Dorsolateral prefrontal cortex (tissue), 120 donors: ENCODE measurements at regions of chr6 and their contacts with region 1.

Region 1: DNA sequence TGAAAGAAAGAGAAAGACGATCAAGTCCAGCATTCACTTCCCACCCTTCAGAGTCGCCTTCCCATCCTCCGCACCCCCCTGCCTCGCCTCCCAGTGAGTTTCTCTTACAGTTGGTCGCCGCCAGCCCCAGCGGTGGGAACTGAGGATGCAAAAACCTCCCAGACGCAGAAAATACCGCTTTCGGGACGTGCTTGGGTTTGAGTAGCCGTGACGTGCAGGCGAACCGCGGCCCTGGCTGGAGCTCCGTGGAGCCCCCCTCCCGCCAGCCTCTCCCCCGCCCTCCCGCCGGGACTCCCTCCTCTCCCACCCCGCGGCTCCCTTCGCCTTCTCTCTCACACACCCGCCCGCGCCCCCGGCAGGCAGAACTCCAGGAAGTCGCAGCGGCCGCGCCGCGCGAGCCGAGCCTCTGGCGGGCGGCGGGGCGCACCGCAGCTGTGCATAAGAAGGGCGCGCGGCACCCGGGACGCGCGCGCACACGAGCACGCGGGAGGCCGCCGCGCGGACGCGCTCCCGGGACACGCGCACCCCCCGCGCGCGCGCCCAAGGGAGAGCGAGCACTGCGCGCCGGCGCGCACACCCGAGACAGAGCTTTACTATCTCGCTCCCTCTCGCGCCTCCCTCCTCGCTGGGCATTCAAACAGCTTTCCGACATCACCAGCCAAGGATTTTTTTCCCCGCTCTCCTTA is at the start of gene ADGRB3:
- DNase-seq: peak; percentile 85 to 96 (median 92)
- H3K4me3 ChIP-seq: peak within 1 kb of the TSS; percentile 67 to 96 (median 83)
- H3K27ac ChIP-seq: peak within 1 kb of the TSS; percentile 89 to 99 (median 97)
- H3K27me3 ChIP-seq: no peaks in the 10 kb centered on the region
- CTCF ChIP-seq: peak in 29 of 56 donors; percentile 4 to 55 (median 24)
- total RNA-seq, gene ADGRB3: 64.3 to 152 (median 114) TPM

Region 2: GRCh38 chr6:67131827-67132226 is 1503.0 kb before region 1 on chr6:
- intact Hi-C with region 1: loop called in 1 of 2 experiments (anchors 10 kb)
- DNase-seq: peak; percentile 20 to 87 (median 70)
- H3K4me3 ChIP-seq: no peak overlapping the region
- H3K27ac ChIP-seq: peak overlapping the region in 4 of 59 donors; percentile 11 to 58 (median 36)
- H3K27me3 ChIP-seq: no peaks in the 10 kb centered on the region
- CTCF ChIP-seq: no peak

Region 3: GRCh38 chr6:68108233-68108835 is 526.5 kb before region 1 on chr6:
- intact Hi-C with region 1: no loop called
- DNase-seq: no peak
- H3K4me3 ChIP-seq: no peak overlapping the region
- H3K27ac ChIP-seq: peak overlapping the region in 2 of 59 donors; percentile 16
- H3K27me3 ChIP-seq: no peaks in the 10 kb centered on the region
- CTCF ChIP-seq: no peak

Region 4: GRCh38 chr6:68506911-68507310 is 128.0 kb before region 1 on chr6:
- intact Hi-C with region 1: no loop called
- DNase-seq: no peak
- H3K4me3 ChIP-seq: no peak overlapping the region
- H3K27ac ChIP-seq: no peak overlapping the region
- H3K27me3 ChIP-seq: no peaks in the 10 kb centered on the region
- CTCF ChIP-seq: no peak

Region 5: DNA sequence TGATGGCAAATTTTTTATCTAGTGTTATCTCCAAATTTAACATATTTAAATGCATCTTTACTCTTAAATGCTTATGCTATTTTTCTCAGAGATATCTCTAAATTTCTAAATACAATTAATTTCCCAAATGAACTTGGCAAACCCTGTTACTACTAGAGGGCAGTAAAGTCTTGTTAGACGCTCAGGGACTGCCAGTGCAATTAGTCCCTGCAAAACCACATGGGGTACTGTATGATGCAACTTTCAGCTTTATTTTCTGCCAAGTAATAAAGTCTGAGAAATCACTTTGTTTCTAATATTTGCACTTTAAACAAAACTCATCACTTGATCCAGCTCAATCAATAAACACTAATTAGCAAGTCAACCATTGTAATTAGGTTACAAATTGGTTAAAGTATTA is 75.8 kb before region 1 on chr6:
- intact Hi-C with region 1: loop called (anchors 2 to 5 kb)
- DNase-seq: peak in 1 of 10 donors; percentile 17
- H3K4me3 ChIP-seq: peak overlapping the region in 39 of 59 donors; percentile 0 to 53 (median 24)
- H3K27ac ChIP-seq: peak overlapping the region in 5 of 59 donors; percentile 1 to 55 (median 40)
- H3K27me3 ChIP-seq: no peaks in the 10 kb centered on the region
- CTCF ChIP-seq: peak in 55 of 56 donors; percentile 10 to 79 (median 53)

Region 6: DNA sequence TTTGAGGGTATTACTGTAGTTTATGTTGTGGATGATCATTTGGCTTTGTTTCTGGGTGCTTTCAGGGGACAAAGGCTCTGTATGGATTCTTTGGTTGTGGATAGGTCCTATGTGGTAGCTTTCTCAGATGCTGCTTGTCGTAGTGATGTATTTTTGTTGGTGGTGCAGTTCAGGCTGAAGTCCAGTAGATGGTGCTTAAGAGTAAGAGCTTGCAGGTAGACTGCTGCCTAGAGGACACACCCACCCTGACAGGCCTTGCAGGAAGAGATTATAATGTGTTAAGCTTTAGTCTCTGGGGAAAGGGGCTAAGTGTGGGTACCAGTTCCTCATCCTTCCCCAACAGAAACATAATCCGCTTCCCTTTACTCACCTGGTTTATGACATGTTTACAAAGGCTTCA is 62.3 kb before region 1 on chr6:
- intact Hi-C with region 1: loop called in 1 of 2 experiments (anchors 5 kb)
- DNase-seq: peak in 1 of 10 donors; percentile 5
- H3K4me3 ChIP-seq: no peak overlapping the region
- H3K27ac ChIP-seq: no peak overlapping the region
- H3K27me3 ChIP-seq: no peaks in the 10 kb centered on the region
- CTCF ChIP-seq: peak in 34 of 56 donors; percentile 9 to 66 (median 30)

Region 7: DNA sequence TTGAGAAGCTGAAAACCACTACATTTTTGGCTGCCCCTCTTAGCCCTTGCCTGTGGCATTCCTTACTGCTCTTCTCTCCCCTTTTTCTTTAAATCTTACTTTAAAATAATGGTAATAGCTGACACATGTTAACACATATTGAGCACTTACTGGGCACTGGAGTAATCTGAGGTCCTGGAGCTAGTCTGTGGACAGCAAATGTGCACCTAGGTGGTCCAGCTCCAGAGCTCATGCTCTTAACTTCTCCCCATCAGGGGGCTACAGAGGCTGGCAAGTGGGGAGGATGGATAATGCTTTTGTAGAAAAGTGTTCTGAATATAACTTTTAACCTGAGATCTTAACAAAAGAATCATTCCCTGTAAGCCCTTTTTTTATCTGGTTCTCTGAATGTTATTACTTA is 75.0 kb after region 1 on chr6:
- intact Hi-C with region 1: loop called in 1 of 2 experiments (anchors 5 kb)
- DNase-seq: no peak
- H3K4me3 ChIP-seq: peak overlapping the region in 49 of 59 donors; percentile 1 to 53 (median 26)
- H3K27ac ChIP-seq: peak overlapping the region; percentile 25 to 90 (median 79)
- H3K27me3 ChIP-seq: no peaks in the 10 kb centered on the region
- CTCF ChIP-seq: no peak

Region 8: GRCh38 chr6:68778356-68779020 is 143.6 kb after region 1 on chr6:
- intact Hi-C with region 1: loop called (anchors 1 kb)
- DNase-seq: peak in 6 of 10 donors; percentile 25 to 67 (median 54)
- H3K4me3 ChIP-seq: peak overlapping the region in 52 of 59 donors; percentile 3 to 61 (median 36)
- H3K27ac ChIP-seq: peak overlapping the region; percentile 60 to 98 (median 87)
- H3K27me3 ChIP-seq: no peaks in the 10 kb centered on the region
- CTCF ChIP-seq: peak; percentile 56 to 98 (median 87)

Region 9: DNA sequence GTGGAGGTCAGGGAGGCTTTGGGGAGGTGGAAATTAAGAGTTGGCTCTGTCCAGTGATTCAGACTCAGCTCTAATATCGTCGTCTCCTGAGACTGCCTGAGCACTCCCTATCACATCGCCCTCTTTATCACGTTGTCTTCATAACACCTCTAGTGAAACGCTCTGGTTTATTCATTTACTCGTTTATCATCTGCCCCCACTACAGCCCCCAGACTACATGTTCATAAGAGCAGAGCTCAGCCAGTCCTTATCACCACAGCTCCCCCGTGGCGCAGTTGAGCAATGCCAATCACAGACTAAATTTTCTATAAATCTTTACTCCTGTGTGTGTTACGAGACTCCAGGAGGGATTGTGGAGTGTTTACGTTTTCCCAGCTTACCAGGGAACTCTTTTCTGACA is 316.4 kb after region 1 on chr6:
- intact Hi-C with region 1: no loop called
- DNase-seq: peak in 3 of 10 donors; percentile 7 to 52 (median 22)
- H3K4me3 ChIP-seq: no peak overlapping the region
- H3K27ac ChIP-seq: peak overlapping the region in 2 of 59 donors; percentile 19 to 21
- H3K27me3 ChIP-seq: no peaks in the 10 kb centered on the region
- CTCF ChIP-seq: no peak

Region 10: DNA sequence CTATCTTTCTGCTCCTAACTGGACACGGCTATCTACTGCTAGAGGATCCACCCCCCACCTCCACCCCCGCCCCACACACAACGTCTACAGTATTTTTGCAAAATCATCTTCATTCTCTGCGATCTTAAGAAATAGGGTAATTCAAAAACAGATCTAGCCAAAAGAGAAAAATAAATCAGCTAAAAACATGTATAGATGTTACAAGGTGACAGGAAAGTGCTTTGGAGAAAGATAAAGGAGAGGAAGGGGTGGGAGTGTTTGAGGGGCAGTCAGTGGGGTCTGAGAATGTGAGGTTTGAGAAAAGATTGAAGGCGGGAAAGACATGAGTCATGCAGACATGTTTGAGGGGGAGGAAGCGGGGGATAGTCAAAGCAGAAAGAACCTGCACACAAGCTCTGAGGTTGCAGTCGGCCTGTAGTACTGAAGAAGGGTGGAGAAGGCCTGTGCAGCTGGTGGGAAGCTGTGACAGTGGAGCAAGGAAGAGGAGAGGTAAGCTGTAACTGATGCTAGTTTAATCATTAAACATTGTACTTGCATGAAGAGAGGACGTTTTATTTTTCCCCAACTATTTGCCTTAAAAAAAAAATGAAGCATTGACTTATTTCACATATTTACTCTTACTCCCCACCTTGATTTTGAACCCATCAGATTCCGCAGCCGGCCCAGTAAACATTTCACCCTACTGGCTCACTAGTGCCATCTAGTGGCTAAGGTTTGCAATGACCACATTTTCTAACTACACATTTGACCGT is 332.9 kb after region 1 on chr6:
- intact Hi-C with region 1: loop called (anchors 2 to 5 kb)
- DNase-seq: peak in 8 of 10 donors; percentile 38 to 59 (median 52)
- H3K4me3 ChIP-seq: peak overlapping the region in 2 of 59 donors; percentile 1 to 15
- H3K27ac ChIP-seq: peak overlapping the region in 34 of 59 donors; percentile 1 to 70 (median 32)
- H3K27me3 ChIP-seq: no peaks in the 10 kb centered on the region
- CTCF ChIP-seq: peak; percentile 70 to 97 (median 90)